ENCODE measurements at regions of chr9 and their contacts with region 1.

Region 1: GRCh38 chr9:128396970-128397613 is 23.6 kb upstream of the CERCAM start:
- DNase-seq: no peak
- H3K4me3 ChIP-seq: no peak overlapping the region
- H3K27me3 ChIP-seq: peaks cover 6% of the 10 kb centered on the region; the same call in 1 of the 2 replicates
- CTCF ChIP-seq: no peak

Region 2: DNA sequence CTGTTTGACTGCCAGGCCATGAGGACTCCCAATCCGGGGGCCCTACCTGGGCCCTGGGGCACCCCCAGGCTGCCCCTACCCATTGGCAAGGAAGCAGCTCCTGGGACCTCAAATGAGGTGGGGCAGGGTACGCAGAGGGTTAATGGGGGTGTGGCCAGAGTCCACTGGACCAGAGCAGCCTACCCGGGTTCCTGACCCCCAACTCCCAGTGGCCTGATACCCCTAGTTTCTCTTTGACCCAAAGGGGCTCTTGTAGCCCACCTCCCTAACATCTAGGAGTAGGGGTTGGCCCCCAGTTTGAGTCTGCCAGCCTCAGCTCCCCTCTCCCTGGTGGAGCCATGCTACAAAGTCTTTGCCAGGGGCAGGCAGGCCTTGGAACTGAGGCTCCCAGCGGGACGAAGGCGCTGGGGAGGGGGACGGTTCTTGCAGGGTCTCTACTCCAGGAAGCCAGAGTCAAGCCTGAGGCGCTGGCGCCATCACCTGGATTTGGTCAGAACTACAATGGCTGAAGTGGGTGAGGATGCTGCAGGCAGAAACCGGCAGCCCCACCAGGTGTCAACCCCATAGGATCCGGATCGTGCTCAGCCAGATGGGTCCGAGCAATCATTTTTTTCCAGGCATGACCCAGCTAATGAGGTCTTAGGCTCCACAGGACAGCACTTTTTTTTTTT is 15.2 kb after region 1 on chr9:
- CTCF ChIA-PET with region 1: interaction called, 24 read pairs
- POLR2A ChIA-PET with region 1: no interaction called
- DNase-seq: no peak
- H3K4me3 ChIP-seq: no peak overlapping the region
- H3K27me3 ChIP-seq: peaks cover 8% of the 10 kb centered on the region
- CTCF ChIP-seq: peak; percentile 69

Measured in BJ (cell line).